A673 (cell line): ENCODE measurements at regions of chr3 and their contacts with region 1.

Region 1: DNA sequence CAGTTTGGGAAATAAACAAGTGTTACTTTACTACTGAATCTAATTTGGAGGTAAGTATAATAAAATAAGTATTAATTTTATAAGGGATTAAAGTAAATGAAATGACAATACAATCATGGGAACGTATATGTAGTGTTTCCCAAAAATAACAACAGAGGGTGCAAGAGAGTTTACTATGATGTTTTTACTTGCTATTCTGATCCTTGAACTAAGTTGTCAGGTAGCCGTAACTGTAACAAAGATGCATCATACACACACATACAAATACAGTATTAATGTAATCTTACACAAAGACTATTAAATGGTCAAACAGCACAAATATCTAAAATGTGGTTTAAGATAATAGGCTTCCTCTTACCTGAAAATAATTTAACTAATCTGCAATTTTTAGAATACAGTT is 311.4 kb downstream of the TBC1D5 start:
- DNase-seq: peak; percentile 43
- H3K4me3 ChIP-seq: no peak overlapping the region
- H3K27ac ChIP-seq: no peak overlapping the region
- H3K4me1 ChIP-seq: no peaks in the 10 kb centered on the region
- H3K27me3 ChIP-seq: no peaks in the 10 kb centered on the region
- CTCF ChIP-seq: peak; percentile 63

Region 2: DNA sequence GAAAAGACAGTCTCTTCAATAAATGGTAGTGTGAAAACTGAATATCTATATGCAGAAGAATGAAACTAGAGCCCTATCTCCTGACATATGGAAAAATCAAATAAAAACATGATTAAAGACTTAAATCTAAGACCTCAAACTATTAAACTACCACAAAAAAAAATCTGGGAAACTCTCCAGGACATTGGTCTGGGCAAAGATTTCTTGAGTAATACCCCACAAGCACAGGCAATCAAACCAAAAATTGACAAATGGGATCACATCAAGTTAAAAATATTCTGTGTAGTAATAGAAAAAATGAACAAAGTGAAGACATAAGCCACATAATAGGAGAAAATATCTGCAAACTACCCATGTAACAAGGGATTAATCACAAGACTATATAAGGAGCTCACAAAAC is 25.0 kb after region 1 on chr3:
- CTCF ChIA-PET with region 1: no interaction called
- POLR2A ChIA-PET with region 1: no interaction called
- intact Hi-C with region 1: no loop called
- DNase-seq: no peak
- H3K4me3 ChIP-seq: no peak overlapping the region
- H3K27ac ChIP-seq: no peak overlapping the region
- H3K4me1 ChIP-seq: no peaks in the 10 kb centered on the region
- H3K27me3 ChIP-seq: no peaks in the 10 kb centered on the region
- CTCF ChIP-seq: no peak

Region 3: DNA sequence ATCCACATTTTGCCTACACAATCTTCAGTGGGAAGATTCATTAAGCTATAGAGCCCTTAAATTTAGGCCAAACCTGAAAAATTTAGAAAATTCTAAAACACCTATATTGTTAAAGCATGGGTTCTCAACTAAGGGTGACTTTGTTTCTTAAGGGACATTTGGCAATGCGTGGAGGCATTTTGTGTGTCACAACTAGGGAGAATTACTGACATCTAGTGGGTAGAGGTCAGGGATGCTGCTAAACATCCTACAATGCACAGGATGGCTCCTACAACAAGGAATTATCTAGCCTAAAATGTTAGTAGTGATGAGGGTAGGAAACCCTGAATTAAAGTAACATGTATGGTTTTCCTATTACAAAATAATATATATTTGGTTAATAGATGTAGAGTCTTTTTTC is 255.6 kb after region 1 on chr3:
- CTCF ChIA-PET with region 1: no interaction called
- POLR2A ChIA-PET with region 1: no interaction called
- intact Hi-C with region 1: loop called (anchors 1 kb)
- DNase-seq: peak; percentile 50
- H3K4me3 ChIP-seq: no peak overlapping the region
- H3K27ac ChIP-seq: no peak overlapping the region
- H3K4me1 ChIP-seq: no peaks in the 10 kb centered on the region
- H3K27me3 ChIP-seq: no peaks in the 10 kb centered on the region
- CTCF ChIP-seq: peak; percentile 46

Region 4: GRCh38 chr3:18334837-18335601 is 904.0 kb after region 1 on chr3:
- CTCF ChIA-PET with region 1: no interaction called
- POLR2A ChIA-PET with region 1: no interaction called
- intact Hi-C with region 1: no loop called
- DNase-seq: no peak
- H3K4me3 ChIP-seq: no peak overlapping the region
- H3K27ac ChIP-seq: no peak overlapping the region
- H3K4me1 ChIP-seq: no peaks in the 10 kb centered on the region
- H3K27me3 ChIP-seq: no peaks in the 10 kb centered on the region
- CTCF ChIP-seq: no peak